Left cardiac atrium (tissue), 4 donors: ENCODE measurements at regions of chr7 and their contacts with region 1.

Region 1: DNA sequence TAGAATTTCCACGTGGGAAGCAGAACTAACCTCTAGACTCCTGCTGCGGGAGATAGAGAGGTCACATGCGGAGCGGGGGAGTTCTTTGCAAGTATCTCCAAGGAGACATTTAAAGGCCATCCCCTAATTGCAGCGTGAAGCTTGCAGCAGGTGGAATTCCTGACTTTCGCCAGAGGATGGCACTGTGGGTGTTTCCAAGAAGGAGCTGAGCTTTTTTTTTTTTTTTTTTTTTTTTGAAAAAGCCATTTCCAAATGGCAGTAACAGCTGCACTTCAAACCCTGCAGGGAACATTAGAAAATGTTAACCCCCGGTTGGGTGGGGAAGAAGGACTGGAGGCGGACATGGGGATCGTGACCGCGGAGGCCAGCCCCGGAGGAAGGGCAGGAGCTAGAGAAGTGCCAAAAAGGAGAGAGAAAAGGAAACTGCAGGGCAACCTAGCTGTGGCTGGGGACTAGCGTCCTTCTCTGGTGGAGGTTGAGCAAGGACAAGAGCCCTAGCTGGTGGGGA is 487.7 kb downstream of the TYW1 start:
- DNase-seq: peak; percentile 48
- ATAC-seq: peak; percentile 38 to 47

Region 2: GRCh38 chr7:67413670-67414069 is 70.6 kb before region 1 on chr7:
- intact Hi-C with region 1: no loop called
- DNase-seq: no peak
- ATAC-seq: no peak

Region 3: DNA sequence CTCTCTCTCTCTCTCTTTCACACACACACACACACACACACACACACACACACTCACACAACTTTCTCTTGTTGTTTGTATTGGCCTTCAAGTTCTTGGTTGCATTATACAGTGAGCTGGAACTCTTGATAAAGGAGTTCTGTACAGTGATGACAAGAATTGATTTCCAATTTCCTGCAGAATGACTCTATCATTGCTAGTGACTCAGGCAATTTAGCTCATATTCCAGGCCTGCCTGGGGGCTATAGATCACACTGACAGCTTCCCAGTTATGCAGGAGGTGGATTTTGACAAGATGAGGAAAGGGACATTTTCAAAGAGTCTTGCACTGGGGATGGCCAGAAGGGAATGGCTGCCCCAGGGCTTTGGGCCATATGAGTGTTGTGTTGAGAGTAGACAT is 21.2 kb after region 1 on chr7:
- intact Hi-C with region 1: no loop called
- DNase-seq: no peak
- ATAC-seq: no peak

Region 4: GRCh38 chr7:67621704-67622103 is 137.4 kb after region 1 on chr7:
- intact Hi-C with region 1: loop called in 1 of 2 experiments (anchors 5 kb)
- DNase-seq: no peak
- ATAC-seq: no peak